ENCODE measurements at regions of chr4 and their contacts with region 1.

Region 1: DNA sequence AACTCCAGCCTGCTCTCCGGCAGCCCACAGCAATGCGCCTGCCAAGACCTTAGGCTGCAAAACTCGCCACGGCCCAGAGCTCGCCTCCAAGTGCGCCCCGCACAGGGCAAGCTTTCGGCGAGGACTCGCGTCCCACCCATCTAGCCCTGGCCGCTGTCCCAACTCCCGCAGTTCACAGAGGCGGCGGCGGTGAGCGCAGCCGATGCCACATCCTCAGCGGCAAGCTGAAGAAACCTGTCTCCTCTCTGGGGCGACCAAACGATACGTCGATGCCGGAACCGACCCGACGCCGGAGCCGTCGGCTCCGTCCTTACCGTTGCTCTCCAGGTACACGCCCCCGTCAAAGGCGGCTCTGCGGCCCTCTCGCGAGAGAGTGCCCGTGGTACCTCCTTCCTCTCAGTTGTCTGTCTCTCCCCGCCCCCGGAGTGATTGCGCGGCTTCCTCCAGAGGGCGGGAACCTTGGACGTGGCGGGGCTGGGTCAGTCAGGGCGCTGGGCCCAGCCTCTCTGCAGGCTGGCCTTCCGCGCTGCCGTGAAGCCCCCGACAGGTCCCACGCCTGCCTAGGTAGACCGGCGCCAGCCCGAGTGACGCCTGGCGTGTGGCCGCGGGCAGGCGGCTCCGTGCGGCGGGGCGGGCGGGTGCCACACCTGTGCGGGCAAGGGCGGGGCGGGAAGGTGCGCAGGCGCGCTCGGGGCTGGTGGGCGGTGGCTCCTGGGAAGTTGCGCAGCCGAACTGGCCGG is 380 bp upstream of the RAB33B start:
- DNase-seq: peak; percentile 97
- ATAC-seq: peak; percentile 88
- H3K4me3 Mint-ChIP-seq: peak overlapping the region; percentile 95
- H3K27ac Mint-ChIP-seq: peak overlapping the region; percentile 98
- H3K4me1 Mint-ChIP-seq: peaks cover 55% of the 10 kb centered on the region
- H3K27me3 Mint-ChIP-seq: no peaks in the 10 kb centered on the region
- CTCF ChIP-seq: no peak

Region 2: DNA sequence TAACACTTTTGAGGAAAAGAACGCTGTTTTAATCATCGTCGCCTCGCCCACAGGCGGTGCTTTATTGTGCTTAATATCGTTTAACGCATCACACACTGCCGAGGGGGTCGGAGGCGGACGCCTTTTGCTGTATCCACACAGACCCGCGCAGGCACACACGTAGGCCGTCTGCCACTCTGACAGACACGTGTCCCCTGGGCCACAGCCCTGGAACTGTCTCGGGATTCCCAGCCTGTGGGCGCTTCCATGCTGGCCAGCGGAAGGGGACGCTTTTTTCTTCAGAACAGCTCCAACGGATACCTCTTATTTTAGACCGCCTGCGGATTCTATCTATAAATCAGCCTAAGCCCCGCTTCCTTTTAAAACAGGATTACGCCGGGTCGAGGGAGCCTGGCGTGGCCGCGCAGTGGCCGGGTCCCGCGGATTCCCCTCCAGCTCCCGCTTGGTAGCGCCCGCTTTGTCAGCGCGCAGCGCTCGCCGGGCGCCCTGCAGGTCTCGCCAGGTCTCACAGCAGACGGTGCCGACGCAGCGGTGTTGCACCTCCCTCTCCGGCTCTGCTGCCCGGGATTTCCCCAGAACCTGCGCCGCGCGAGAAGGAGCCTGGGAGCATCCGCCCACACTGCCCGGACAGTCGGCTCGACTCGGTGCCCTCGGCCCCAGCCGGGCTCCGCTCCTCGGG is 438.1 kb before region 1 on chr4 and contains the start of gene NOCT:
- CTCF ChIA-PET with region 1: no interaction called
- POLR2A ChIA-PET with region 1: interaction called, 10 read pairs
- intact Hi-C with region 1: loop called (anchors 1 kb)
- DNase-seq: peak; percentile 86
- ATAC-seq: peak; percentile 91
- H3K4me3 Mint-ChIP-seq: peak within 1 kb of the TSS; percentile 92
- H3K27ac Mint-ChIP-seq: peak within 1 kb of the TSS; percentile 99
- H3K4me1 Mint-ChIP-seq: peaks cover 32% of the 10 kb centered on the region
- H3K27me3 Mint-ChIP-seq: no peaks in the 10 kb centered on the region
- CTCF ChIP-seq: no peak
- total RNA-seq, gene NOCT: 9.1 and 9.4 TPM in 2 replicates

Region 3: GRCh38 chr4:139177868-139178611 is 275.5 kb before region 1 on chr4:
- CTCF ChIA-PET with region 1: no interaction called
- POLR2A ChIA-PET with region 1: interaction called, 5 read pairs
- intact Hi-C with region 1: loop called (anchors 1 kb)
- DNase-seq: peak; percentile 89
- ATAC-seq: peak; percentile 74
- H3K4me3 Mint-ChIP-seq: peak overlapping the region; percentile 93
- H3K27ac Mint-ChIP-seq: peak overlapping the region; percentile 92
- H3K4me1 Mint-ChIP-seq: peaks cover 25% of the 10 kb centered on the region
- H3K27me3 Mint-ChIP-seq: no peaks in the 10 kb centered on the region
- CTCF ChIP-seq: no peak

Region 4: GRCh38 chr4:139416073-139416673 is 37.4 kb before region 1 on chr4:
- CTCF ChIA-PET with region 1: interaction called, 3 read pairs
- POLR2A ChIA-PET with region 1: interaction called, 6 read pairs
- intact Hi-C with region 1: loop called (anchors 1 kb)
- DNase-seq: no peak
- ATAC-seq: no peak
- H3K4me3 Mint-ChIP-seq: no peak overlapping the region
- H3K27ac Mint-ChIP-seq: no peak overlapping the region
- H3K4me1 Mint-ChIP-seq: peaks cover 19% of the 10 kb centered on the region
- H3K27me3 Mint-ChIP-seq: no peaks in the 10 kb centered on the region
- CTCF ChIP-seq: peak; percentile 99

Region 5: DNA sequence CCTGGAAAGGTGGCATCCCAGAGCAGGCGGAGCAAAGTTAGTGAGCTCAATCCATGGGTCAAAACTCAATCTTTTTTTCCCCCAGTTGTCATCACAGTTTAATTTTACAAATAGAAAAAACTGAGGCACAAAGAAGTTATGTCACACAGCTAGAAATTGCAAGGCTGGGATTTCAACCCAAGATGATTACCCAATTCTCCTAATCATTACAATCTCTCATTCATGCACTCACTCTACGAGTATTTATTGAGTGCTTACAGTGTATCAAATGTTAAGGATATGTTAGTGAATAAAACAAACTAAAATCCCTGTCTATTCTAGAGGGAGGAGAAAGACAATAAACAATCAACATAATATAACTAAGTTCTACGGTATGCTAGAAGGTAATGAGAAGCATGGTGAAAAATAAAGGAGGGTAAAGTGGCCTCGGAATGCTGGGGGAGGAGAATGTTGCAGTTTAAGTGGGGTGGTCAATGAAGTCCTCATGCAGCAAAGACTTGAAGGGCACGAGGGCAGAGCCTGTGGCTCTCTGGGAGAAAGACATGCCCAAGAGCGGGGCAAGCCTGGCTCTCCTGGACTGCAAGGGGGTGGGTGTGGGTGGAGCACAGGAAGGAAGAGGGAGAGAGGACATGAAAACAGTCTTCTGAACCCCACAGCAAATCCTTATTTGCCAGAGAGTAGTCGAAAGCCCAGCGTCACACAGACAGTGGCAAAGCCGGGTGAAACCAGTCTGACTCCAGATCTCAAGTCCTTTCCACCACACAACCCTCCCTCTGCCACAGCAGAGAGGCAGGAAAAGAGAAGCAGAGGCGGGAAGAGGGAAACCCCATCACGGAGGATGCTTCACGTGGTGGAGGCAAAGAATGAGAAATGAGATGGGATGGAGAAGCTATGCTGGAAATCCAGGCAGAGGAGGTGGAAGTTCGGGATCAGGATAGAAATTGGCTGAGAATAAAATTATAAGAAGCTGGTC is 48.7 kb after region 1 on chr4:
- CTCF ChIA-PET with region 1: no interaction called
- POLR2A ChIA-PET with region 1: no interaction called
- intact Hi-C with region 1: loop called (anchors 2 kb)
- DNase-seq: no peak
- ATAC-seq: no peak
- H3K4me3 Mint-ChIP-seq: no peak overlapping the region
- H3K27ac Mint-ChIP-seq: no peak overlapping the region
- H3K4me1 Mint-ChIP-seq: no peaks in the 10 kb centered on the region
- H3K27me3 Mint-ChIP-seq: no peaks in the 10 kb centered on the region
- CTCF ChIP-seq: no peak

Region 6: GRCh38 chr4:139554893-139555704 is 101.6 kb after region 1 on chr4:
- CTCF ChIA-PET with region 1: interaction called, 3 read pairs
- POLR2A ChIA-PET with region 1: interaction called, 19 read pairs
- intact Hi-C with region 1: loop called (anchors 1 kb)
- DNase-seq: peak; percentile 71
- ATAC-seq: peak; percentile 60
- H3K4me3 Mint-ChIP-seq: peak overlapping the region; percentile 95
- H3K27ac Mint-ChIP-seq: peak overlapping the region; percentile 94
- H3K4me1 Mint-ChIP-seq: peaks cover 59% of the 10 kb centered on the region
- H3K27me3 Mint-ChIP-seq: no peaks in the 10 kb centered on the region
- CTCF ChIP-seq: no peak

Region 7: GRCh38 chr4:139619644-139620043 is 166.1 kb after region 1 on chr4:
- CTCF ChIA-PET with region 1: no interaction called
- POLR2A ChIA-PET with region 1: no interaction called
- intact Hi-C with region 1: no loop called
- DNase-seq: no peak
- ATAC-seq: peak; percentile 31
- H3K4me3 Mint-ChIP-seq: no peak overlapping the region
- H3K27ac Mint-ChIP-seq: no peak overlapping the region
- H3K4me1 Mint-ChIP-seq: no peaks in the 10 kb centered on the region
- H3K27me3 Mint-ChIP-seq: peaks cover 12% of the 10 kb centered on the region
- CTCF ChIP-seq: no peak

Region 8: GRCh38 chr4:140756319-140757231 is 1303.0 kb after region 1 on chr4 and contains the start of gene TBC1D9:
- CTCF ChIA-PET with region 1: no interaction called
- POLR2A ChIA-PET with region 1: no interaction called
- intact Hi-C with region 1: loop called (anchors 5 kb)
- DNase-seq: peak; percentile 70
- ATAC-seq: peak; percentile 48
- H3K4me3 Mint-ChIP-seq: peak within 1 kb of the TSS; percentile 89
- H3K27ac Mint-ChIP-seq: peak within 1 kb of the TSS; percentile 94
- H3K4me1 Mint-ChIP-seq: peaks cover 62% of the 10 kb centered on the region
- H3K27me3 Mint-ChIP-seq: no peaks in the 10 kb centered on the region
- CTCF ChIP-seq: no peak
- total RNA-seq, gene TBC1D9: 37.9 and 46.0 TPM in 2 replicates

Measured in activated B cell treated with CpG ODN at 0.5 μM for 24 hours (primary cell).